Activated CD8-positive, alpha-beta T cell treated with anti-CD3 and anti-CD28 coated beads for 36 hours (primary cell): ENCODE measurements at regions of chrX and their contacts with region 1.

Region 1: DNA sequence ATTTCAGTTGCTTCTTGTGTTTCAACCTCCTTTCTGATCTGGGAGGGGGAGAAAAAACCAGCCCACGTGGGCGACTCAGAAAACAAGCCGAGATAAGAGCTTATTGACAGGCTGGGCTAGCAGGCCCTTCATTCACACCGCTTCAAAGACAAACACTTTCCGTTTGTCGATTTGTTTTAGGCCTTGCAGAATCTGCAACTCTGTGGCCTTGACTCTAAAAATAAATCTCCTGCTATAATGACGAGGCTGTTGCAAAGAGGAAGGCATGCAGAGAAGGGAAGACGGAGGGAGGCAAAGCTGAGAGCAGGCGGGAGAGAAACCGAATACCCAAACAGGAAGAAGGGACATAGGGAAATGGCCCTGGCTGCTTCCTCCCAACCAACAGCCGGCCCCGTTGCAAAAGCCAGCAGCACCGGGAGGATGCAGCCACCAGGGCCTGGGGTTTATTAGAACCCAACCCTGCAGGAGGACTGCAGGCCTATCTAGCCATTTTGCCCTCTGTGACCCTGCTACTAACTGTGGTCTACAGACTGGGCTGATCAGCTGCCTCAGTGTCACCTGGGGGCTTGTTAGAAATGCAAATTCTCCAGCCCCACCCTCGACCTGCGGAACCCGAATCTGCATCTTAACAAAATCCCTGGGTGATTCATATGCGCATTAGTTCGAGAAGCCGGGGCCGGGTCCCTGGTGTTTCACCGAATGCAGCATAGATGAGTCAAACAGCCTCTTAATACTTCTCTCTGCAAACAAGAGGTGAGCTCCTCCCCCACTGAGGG is 325.5 kb downstream of the BCOR start:
- DNase-seq: peak; percentile 89
- ATAC-seq: peak; percentile 75
- H3K4me3 Mint-ChIP-seq: peak overlapping the region; percentile 56
- H3K27ac Mint-ChIP-seq: peak overlapping the region; percentile 91
- H3K4me1 Mint-ChIP-seq: peaks cover 36% of the 10 kb centered on the region
- H3K27me3 Mint-ChIP-seq: no peaks in the 10 kb centered on the region
- CTCF ChIP-seq: no peak

Region 2: GRCh38 chrX:39755143-39756032 is 16.9 kb before region 1 on chrX:
- CTCF ChIA-PET with region 1: no interaction called
- POLR2A ChIA-PET with region 1: no interaction called
- intact Hi-C with region 1: no loop called
- DNase-seq: no peak
- ATAC-seq: no peak
- H3K4me3 Mint-ChIP-seq: no peak overlapping the region
- H3K27ac Mint-ChIP-seq: no peak overlapping the region
- H3K4me1 Mint-ChIP-seq: peaks cover 17% of the 10 kb centered on the region
- H3K27me3 Mint-ChIP-seq: no peaks in the 10 kb centered on the region
- CTCF ChIP-seq: no peak

Region 3: DNA sequence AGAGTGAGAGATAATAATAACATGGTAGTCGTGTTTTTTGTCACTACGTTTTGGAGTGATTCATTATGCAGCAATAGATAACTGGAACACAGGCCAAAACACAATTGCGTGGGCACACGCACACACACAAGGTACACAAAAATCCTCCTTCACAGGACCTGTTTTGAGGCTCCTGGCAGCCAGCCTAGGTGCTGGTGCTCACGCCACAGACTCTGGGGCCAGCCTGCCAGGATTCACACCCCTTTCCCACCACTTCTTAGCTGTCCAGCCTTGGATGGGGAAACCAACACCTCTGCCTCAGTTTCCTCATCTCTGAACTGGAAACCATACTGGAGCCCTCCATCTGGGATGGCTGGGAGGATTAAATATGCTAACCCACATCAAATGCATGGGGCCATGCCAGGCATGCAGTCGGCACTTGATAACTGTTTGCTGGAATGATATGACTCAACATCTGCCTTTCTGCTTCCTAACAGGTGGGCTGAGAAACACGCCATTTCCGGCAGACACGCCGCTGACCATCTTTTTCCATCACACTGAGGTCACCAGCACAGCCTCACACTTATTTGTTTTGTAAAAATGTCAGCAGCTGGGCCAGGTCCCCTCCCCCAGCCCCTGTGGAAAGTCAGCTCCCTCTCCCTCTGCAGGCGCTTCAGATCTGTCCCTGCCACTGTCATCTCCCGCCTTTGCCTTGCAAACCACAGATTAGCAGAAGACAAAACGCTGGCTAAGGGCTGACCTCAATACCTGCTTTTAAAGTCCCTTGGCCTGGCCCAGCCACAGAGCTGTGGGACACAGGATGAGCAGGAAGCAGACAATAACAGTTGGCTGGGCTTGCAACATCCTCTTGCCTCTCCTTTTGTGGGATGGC is 88.0 kb after region 1 on chrX:
- CTCF ChIA-PET with region 1: no interaction called
- POLR2A ChIA-PET with region 1: interaction called, 4 read pairs
- intact Hi-C with region 1: loop called (anchors 5 kb)
- DNase-seq: peak; percentile 94
- ATAC-seq: peak; percentile 66
- H3K4me3 Mint-ChIP-seq: peak overlapping the region; percentile 17
- H3K27ac Mint-ChIP-seq: peak overlapping the region; percentile 98
- H3K4me1 Mint-ChIP-seq: peaks cover 57% of the 10 kb centered on the region
- H3K27me3 Mint-ChIP-seq: no peaks in the 10 kb centered on the region
- CTCF ChIP-seq: no peak

Region 4: GRCh38 chrX:39874202-39874816 is 102.1 kb after region 1 on chrX:
- CTCF ChIA-PET with region 1: no interaction called
- POLR2A ChIA-PET with region 1: no interaction called
- intact Hi-C with region 1: loop called (anchors 5 kb)
- DNase-seq: peak; percentile 86
- ATAC-seq: peak; percentile 81
- H3K4me3 Mint-ChIP-seq: no peak overlapping the region
- H3K27ac Mint-ChIP-seq: peak overlapping the region; percentile 91
- H3K4me1 Mint-ChIP-seq: peaks cover 48% of the 10 kb centered on the region
- H3K27me3 Mint-ChIP-seq: no peaks in the 10 kb centered on the region
- CTCF ChIP-seq: no peak